ENCODE measurements at regions of chr18 and their contacts with region 1.

Region 1: DNA sequence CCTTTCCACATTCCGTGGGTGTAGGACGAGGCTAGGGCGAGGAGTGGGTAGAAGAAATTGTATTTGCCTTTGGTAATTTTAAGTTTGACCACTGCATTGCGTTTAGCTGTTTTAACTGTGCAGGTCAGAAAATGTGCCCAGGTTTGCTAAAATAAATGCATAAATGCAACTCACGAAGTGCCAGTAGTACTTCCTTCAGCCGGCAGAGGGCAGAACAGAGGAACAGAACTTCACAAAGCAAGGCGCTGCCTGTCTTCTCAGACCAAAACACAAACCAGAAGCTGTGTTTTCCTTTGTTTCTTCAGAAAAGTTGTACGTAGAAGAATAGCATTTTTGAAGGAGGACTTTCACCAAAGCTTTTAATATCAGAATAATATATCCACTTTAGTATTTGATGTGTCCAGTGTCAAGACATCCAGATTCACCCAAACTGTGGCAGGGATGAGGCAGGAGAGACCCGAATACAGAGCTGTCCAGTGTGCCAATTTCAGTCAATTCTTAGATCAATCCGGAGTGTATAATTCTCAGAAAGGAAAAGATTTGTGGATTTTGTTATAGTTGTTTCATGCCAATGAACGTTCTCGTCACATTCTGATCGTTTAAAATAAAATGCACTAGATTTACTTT is 348.6 kb downstream of the DLGAP1 start:
- DNase-seq: peak; percentile 24 to 47
- ATAC-seq: peak in 2 of 8 donors; percentile 33 to 58
- H3K4me3 ChIP-seq: no peak overlapping the region
- H3K27ac ChIP-seq: peak overlapping the region in 1 of 10 donors; percentile 3
- H3K4me1 ChIP-seq: no peaks in the 10 kb centered on the region
- H3K27me3 ChIP-seq: no peaks in the 10 kb centered on the region
- CTCF ChIP-seq: peak; percentile 39 to 87 (median 79)

Region 2: DNA sequence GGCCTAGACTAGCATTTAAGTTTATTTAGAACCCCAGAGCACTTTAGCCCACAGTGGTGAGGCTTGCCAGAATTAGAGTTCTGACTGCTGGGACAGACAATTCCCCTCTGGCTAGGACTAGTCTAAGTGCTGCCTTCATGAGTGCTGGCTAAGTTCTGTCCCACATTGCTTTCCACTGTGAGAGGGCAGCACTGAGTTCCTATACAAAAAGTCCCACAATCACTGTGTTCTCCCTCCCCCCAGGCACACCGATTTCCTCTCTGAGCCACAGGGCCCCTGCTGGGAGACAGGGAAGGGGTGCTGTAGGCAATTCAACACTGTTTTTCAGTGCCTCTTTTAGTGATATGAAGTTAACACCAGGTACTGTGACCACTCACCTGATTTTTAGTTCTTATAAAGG is 37.7 kb after region 1 on chr18:
- intact Hi-C with region 1: no loop called
- DNase-seq: no peak
- ATAC-seq: no peak
- H3K4me3 ChIP-seq: no peak overlapping the region
- H3K27ac ChIP-seq: no peak overlapping the region
- H3K4me1 ChIP-seq: no peaks in the 10 kb centered on the region
- H3K27me3 ChIP-seq: no peaks in the 10 kb centered on the region
- CTCF ChIP-seq: no peak

Region 3: GRCh38 chr18:4172196-4173100 is 65.9 kb after region 1 on chr18:
- intact Hi-C with region 1: no loop called
- DNase-seq: no peak
- ATAC-seq: no peak
- H3K4me3 ChIP-seq: no peak overlapping the region
- H3K27ac ChIP-seq: no peak overlapping the region
- H3K4me1 ChIP-seq: no peaks in the 10 kb centered on the region
- H3K27me3 ChIP-seq: no peaks in the 10 kb centered on the region
- CTCF ChIP-seq: no peak

Region 4: DNA sequence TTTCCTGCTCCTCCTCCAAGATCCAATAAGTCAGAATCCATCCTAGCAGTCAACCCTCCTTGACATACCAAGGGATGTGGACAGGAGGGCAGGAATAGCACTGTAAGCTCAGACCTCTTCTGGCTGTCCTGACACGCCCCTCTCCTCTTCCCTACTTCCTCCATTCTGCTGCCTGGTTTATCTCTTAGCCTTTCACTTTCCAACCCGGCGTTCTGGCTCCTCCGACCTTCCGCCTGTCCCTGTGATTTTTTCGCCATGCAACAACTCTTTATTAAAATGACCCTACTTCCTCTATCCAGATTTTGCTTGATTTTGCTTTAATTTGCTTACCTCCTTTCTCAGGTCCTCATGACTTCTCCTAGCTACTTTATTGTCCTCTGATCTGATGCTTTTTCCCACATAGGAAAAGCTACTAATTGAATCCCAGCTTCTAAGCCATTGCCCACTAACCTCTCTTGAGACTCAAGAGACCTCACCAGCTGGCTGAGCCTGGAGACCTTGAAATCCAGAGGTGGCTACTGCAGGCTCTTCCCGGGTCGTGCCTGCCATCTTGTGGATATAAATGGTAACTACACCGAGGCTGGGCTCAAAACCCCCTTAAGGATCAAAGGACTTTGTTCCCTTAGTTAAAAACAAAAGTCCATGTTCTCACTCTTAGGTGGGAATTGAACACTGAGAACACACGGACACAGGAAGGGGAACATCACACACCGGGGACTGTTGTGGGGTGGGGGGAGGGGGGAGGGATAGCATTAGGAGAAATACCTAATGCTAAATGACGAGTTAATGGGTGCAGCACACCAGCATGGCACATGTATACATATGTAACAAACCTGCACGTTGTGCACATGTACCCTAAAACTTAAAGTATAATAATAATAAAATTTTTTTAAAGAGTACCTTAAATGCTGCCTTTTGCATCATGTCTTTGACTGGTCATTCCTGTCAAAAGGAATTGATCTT is 951.1 kb after region 1 on chr18:
- intact Hi-C with region 1: loop called in 7 of 10 experiments (anchors 5 to 10 kb)
- DNase-seq: peak; percentile 20 to 29
- ATAC-seq: peak in 6 of 8 donors; percentile 44 to 82 (median 68)
- H3K4me3 ChIP-seq: peak overlapping the region in 1 of 10 donors; percentile 8
- H3K27ac ChIP-seq: peak overlapping the region in 1 of 10 donors; percentile 52
- H3K4me1 ChIP-seq: peaks cover 0 to 21% (median 0%) of the 10 kb centered on the region in 9 donors
- H3K27me3 ChIP-seq: no peaks in the 10 kb centered on the region
- CTCF ChIP-seq: peak; percentile 47 to 78 (median 74)

Region 5: GRCh38 chr18:5064841-5065370 is 958.4 kb after region 1 on chr18:
- intact Hi-C with region 1: loop called in 1 of 10 experiments (anchors 5 kb)
- DNase-seq: no peak
- ATAC-seq: no peak
- H3K4me3 ChIP-seq: no peak overlapping the region
- H3K27ac ChIP-seq: no peak overlapping the region
- H3K4me1 ChIP-seq: no peaks in the 10 kb centered on the region
- H3K27me3 ChIP-seq: peaks cover 0 to 7% (median 0%) of the 10 kb centered on the region in 7 donors
- CTCF ChIP-seq: no peak